GM13977 (cell line): ENCODE measurements at regions of chr22 and their contacts with region 1.

Region 1: GRCh38 chr22:50030297-50031188 is 18.0 kb upstream of the IL17REL start:
- DNase-seq: peak; percentile 98
- CTCF ChIP-seq: peak; percentile 93

Region 2: DNA sequence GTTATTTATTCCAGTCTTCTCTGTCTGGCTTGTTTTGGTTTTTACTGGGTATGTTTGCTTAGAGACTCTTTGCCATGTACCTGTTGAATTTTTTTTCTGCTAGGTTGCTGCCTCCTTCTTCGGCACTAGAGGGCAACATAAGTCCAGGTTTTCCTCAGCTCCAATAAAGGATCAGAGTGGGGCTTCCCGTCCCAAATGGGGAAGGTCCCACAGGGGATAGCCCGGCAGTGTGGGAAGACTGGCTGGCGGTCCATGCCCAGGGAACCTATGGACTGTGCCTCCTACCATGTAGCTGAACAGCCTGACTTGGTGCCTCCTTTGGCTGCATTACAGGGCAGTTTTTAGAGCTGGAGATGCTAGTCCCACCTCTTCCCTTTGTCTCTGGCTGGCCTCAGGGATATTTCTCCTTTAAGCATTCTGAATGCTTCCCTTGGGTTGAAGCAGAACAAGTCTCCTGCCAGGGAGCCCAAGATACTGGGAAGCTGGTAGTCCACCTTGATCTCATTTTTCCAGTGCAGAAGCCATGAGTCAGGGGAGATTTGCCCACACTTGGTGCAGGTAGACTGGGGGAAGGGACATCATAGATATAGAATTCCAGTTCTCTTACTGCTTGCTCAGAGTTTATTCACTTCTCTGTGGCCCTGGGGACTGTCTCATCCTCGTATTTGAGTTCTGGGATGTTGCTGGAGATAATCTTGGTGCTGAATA is 263.0 kb before region 1 on chr22:
- in situ Hi-C with region 1: loop called (anchors 25 kb)
- DNase-seq: peak; percentile 81
- CTCF ChIP-seq: peak; percentile 78

Region 3: GRCh38 chr22:49936018-49936952 is 94.3 kb before region 1 on chr22:
- in situ Hi-C with region 1: loop called (anchors 25 kb)
- DNase-seq: peak; percentile 92
- CTCF ChIP-seq: no peak